GM13976 (cell line): ENCODE measurements at regions of chrX and their contacts with region 1.

Region 1: GRCh38 chrX:135581496-135581895 is 61.0 kb downstream of the INTS6L start:
- DNase-seq: no peak
- CTCF ChIP-seq: no peak

Region 2: DNA sequence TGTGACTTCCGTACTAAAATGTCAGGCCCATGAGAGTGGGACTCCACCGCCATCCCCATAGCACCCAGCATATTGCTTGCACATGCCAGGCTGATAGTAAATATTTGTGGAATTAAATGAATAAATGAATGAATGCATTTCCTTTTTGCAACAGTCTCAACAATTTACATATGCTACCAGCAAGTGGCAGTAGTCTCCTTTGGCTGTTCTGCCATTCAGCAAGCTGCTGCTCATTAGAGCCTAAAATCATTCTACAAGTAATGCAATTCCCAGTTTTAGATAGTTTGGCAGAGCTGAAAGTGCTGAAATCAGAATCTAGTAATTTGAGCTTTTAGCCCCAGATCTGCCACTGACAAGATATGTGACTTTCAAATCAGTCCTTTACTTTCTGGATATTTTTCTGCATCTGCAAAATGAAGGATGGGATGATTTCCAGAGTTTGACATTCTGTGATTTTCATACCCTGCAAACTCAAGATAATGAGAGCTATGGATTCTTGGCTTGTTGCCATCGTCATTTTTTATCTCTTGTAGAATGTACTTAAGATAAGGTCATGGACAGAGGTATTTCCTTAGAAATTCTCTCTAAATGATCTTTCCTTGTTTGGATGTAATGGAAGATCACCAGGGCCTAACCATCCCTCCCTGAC is 96.7 kb before region 1 on chrX:
- in situ Hi-C with region 1: loop called (anchors 10 kb)
- DNase-seq: peak; percentile 23
- CTCF ChIP-seq: peak; percentile 57